ENCODE measurements at regions of chr11 and their contacts with region 1.

Region 1: GRCh38 chr11:73335204-73335923 is 27.3 kb downstream of the ARHGEF17 start:
- DNase-seq: peak; percentile 94

Region 2: GRCh38 chr11:73262851-73263495 is 72.4 kb before region 1 on chr11:
- intact Hi-C with region 1: loop called in 1 of 2 experiments (anchors 1 kb)
- DNase-seq: peak; percentile 48

Region 3: GRCh38 chr11:73295231-73295995 is 40.0 kb before region 1 on chr11:
- intact Hi-C with region 1: loop called in 1 of 2 experiments (anchors 5 kb)
- DNase-seq: peak; percentile 91

Region 4: GRCh38 chr11:73307323-73308002 is 27.9 kb before region 1 on chr11:
- intact Hi-C with region 1: loop called (anchors 2 kb)
- DNase-seq: peak; percentile 99

Measured in posterior vena cava (tissue), 2 donors.